Heart right ventricle (tissue), 16 donors: ENCODE measurements at regions of chr21 and their contacts with region 1.

Region 1: DNA sequence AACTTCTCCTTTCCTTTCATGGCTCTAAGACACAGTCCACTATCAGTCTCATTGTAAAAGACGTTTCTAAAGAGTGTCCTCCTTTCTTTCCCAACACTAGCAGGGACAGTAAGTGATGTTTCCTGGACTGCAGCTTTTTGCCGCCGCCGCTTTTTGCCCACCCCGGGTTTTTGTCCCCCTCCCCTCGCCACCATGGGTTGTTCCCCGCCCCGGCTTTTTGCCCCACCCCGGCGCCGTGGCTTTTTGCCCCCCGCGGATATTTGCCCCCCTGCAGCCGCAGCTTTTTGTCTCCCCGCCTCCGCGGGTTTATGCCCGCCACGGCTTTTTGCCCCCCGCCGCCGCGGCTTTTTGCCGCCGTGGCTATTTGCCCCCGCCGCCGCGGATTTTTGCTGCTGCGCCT is 95.2 kb downstream of the TPTE start:
- DNase-seq: no peak
- ATAC-seq: no peak
- H3K4me3 ChIP-seq: no peak overlapping the region
- H3K27ac ChIP-seq: no peak overlapping the region
- H3K4me1 ChIP-seq: no peaks in the 10 kb centered on the region
- H3K27me3 ChIP-seq: no peaks in the 10 kb centered on the region
- CTCF ChIP-seq: no peak

Region 2: DNA sequence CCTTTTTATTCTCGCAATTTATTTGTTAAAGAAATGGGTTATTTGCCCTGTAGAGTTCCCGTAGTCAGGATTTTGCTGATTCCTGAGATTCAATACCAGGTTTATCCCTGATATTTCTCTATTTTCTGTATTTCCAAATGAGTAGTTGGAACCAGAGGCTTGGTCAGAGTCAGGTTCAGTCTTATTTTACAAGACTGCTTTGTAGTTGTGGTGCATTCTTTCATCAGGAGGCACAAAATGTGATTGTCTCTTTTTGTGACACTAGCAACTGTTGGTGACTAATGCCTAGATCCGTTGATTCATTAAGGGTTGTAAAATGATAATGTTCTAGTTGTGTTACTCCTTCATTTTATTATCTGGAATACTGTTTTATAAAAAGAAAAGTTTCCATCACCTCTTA is 190.7 kb before region 1 on chr21:
- intact Hi-C with region 1: no loop called
- DNase-seq: no peak
- ATAC-seq: no peak
- H3K4me3 ChIP-seq: no peak overlapping the region
- H3K27ac ChIP-seq: no peak overlapping the region
- H3K4me1 ChIP-seq: no peaks in the 10 kb centered on the region
- H3K27me3 ChIP-seq: peaks cover 0 to 3% (median 0%) of the 10 kb centered on the region in 7 donors
- CTCF ChIP-seq: no peak

Region 3: DNA sequence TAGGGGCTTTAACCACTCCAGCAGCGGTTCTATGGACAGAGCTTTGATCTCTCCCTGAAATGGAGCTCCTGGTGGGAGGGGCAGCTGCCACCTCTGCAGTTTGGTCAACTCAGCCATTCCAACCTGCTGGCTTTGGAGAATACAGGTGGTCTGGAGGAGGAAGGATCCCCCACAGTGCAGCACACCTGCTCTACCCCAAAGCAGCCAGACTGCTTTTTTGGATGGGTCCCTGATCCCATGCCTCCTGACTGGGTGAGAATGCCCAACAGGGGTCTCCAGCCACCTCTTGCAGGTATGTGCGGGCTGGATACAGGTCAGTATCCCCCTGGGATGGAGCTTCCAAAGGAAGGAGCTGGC is 41.2 kb before region 1 on chr21:
- intact Hi-C with region 1: loop called in 1 of 10 experiments (anchors 5 kb)
- DNase-seq: no peak
- ATAC-seq: peak in 3 of 8 donors; percentile 7 to 56 (median 24)
- H3K4me3 ChIP-seq: no peak overlapping the region
- H3K27ac ChIP-seq: no peak overlapping the region
- H3K4me1 ChIP-seq: no peaks in the 10 kb centered on the region
- H3K27me3 ChIP-seq: no peaks in the 10 kb centered on the region
- CTCF ChIP-seq: no peak